Mammary epithelial cell (primary cell): ENCODE measurements at regions of chr6 and their contacts with region 1.

Region 1: GRCh38 chr6:30463651-30464618 is 25.4 kb upstream of the HLA-E start:
- DNase-seq: peak; percentile 55
- H3K4me3 ChIP-seq: no peak overlapping the region
- H3K27ac ChIP-seq: no peak overlapping the region
- H3K4me1 ChIP-seq: peaks cover 19% of the 10 kb centered on the region
- H3K27me3 ChIP-seq: peaks cover 47% of the 10 kb centered on the region
- CTCF ChIP-seq: no peak

Region 2: GRCh38 chr6:30149231-30149630 is 314.7 kb before region 1 on chr6:
- CTCF ChIA-PET with region 1: interaction called, 10 read pairs
- dilution Hi-C with region 1: no loop called
- in situ Hi-C with region 1: no loop called
- intact Hi-C with region 1: no loop called
- DNase-seq: no peak
- H3K4me3 ChIP-seq: no peak overlapping the region
- H3K27ac ChIP-seq: no peak overlapping the region
- H3K4me1 ChIP-seq: peaks cover 3% of the 10 kb centered on the region
- H3K27me3 ChIP-seq: no peaks in the 10 kb centered on the region
- CTCF ChIP-seq: no peak

Region 3: GRCh38 chr6:30489081-30490025 is 25.4 kb after region 1 on chr6 and contains the start of gene HLA-E:
- CTCF ChIA-PET with region 1: no interaction called
- dilution Hi-C with region 1: no loop called
- in situ Hi-C with region 1: no loop called
- intact Hi-C with region 1: no loop called
- DNase-seq: peak; percentile 99
- H3K4me3 ChIP-seq: peak within 1 kb of the TSS; percentile 92 to 99 (median 93)
- H3K27ac ChIP-seq: peak within 1 kb of the TSS; percentile 93
- H3K4me1 ChIP-seq: peaks cover 12% of the 10 kb centered on the region
- H3K27me3 ChIP-seq: no peaks in the 10 kb centered on the region
- CTCF ChIP-seq: no peak
- total RNA-seq, gene HLA-E: 106 to 145 TPM

Region 4: DNA sequence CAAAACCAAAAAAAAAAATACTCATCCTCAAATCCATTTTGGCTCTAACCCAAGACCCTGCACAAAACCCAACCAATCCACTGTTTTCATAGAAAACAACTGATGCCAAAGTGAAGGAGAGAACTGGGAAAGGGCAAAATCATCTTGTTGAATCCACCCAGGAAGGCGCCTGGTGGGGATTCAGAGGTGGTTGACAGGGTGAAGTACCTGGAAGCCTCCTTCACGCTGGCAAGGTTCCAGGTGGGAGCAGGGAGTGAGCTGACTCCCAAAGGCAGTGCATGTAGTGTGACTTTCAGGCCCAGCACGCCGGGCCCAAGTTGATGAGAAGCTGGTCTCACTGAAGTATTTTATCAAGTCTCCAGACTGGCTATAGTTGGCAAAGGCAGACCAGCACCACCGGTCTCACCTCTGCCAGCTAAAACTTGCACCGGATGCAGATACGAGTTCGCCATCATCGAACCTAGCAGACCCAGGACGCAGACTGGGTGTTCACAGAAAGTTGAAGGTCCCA is 136.6 kb after region 1 on chr6:
- CTCF ChIA-PET with region 1: no interaction called
- dilution Hi-C with region 1: loop called (anchors 10 kb)
- in situ Hi-C with region 1: no loop called
- intact Hi-C with region 1: no loop called
- DNase-seq: no peak
- H3K4me3 ChIP-seq: no peak overlapping the region
- H3K27ac ChIP-seq: no peak overlapping the region
- H3K4me1 ChIP-seq: no peaks in the 10 kb centered on the region
- H3K27me3 ChIP-seq: no peaks in the 10 kb centered on the region
- CTCF ChIP-seq: no peak

Region 5: DNA sequence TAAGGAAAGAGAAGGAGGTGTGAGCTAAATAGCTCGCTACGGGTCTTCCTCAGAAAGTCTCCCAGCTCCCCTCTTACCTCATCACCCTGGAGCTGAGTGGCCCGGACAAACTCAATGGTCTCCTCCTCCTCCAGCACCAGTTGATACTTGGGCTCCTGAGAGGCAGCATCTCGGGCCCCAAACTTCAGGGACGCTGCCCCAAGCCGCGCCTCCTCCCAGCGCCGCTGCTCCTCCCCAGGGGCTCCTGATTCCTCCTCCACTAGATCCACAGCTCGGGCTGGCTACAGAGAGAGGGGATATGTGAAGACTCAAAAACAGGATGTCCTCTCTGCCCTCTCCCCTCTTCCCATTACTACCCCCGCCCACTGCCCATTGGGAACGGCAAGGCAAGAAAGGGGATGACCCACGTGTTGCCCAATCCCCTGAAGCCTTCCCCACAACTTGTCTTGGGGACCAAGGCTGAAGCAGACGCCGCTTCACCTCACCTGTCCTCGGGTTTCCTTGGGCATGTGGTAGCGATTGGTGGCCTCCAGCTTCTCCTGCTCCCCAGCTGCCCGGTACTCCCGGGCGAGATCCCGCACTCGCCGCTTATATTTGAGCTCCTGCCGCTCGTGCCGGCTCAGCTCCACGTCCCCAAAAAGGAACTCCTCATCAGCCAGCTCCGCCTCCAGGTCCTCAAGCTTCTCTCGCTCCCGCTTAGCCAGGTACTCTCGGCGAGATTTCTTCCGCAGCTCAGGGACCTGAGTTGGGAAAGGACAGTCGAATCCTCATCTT is 201.2 kb after region 1 on chr6:
- CTCF ChIA-PET with region 1: no interaction called
- dilution Hi-C with region 1: loop called (anchors 10 kb)
- in situ Hi-C with region 1: no loop called
- intact Hi-C with region 1: no loop called
- DNase-seq: no peak
- H3K4me3 ChIP-seq: no peak overlapping the region
- H3K27ac ChIP-seq: no peak overlapping the region
- H3K4me1 ChIP-seq: no peaks in the 10 kb centered on the region
- H3K27me3 ChIP-seq: no peaks in the 10 kb centered on the region
- CTCF ChIP-seq: no peak

Region 6: GRCh38 chr6:30828027-30828960 is 364.4 kb after region 1 on chr6:
- CTCF ChIA-PET with region 1: no interaction called
- dilution Hi-C with region 1: no loop called
- in situ Hi-C with region 1: no loop called
- intact Hi-C with region 1: no loop called
- DNase-seq: peak; percentile 88
- H3K4me3 ChIP-seq: no peak overlapping the region
- H3K27ac ChIP-seq: peak overlapping the region; percentile 58
- H3K4me1 ChIP-seq: peaks cover 28% of the 10 kb centered on the region
- H3K27me3 ChIP-seq: no peaks in the 10 kb centered on the region
- CTCF ChIP-seq: peak; percentile 95